PC-9 (cell line): ENCODE measurements at regions of chr17 and their contacts with region 1.

Region 1: GRCh38 chr17:6473128-6473767 is 29.0 kb downstream of the PIMREG start:
- DNase-seq: peak; percentile 51 to 87
- H3K4me3 ChIP-seq: no peak overlapping the region
- H3K27ac ChIP-seq: no peak overlapping the region
- H3K4me1 ChIP-seq: peaks cover 32% of the 10 kb centered on the region
- H3K27me3 ChIP-seq: no peaks in the 10 kb centered on the region
- CTCF ChIP-seq: peak; percentile 99

Region 2: GRCh38 chr17:6507535-6507934 is 34.3 kb after region 1 on chr17:
- CTCF ChIA-PET with region 1: interaction called, 3 read pairs
- POLR2A ChIA-PET with region 1: no interaction called
- intact Hi-C with region 1: loop called (anchors 1 kb)
- DNase-seq: peak; percentile 84 to 88
- H3K4me3 ChIP-seq: no peak overlapping the region
- H3K27ac ChIP-seq: peak overlapping the region; percentile 86
- H3K4me1 ChIP-seq: peaks cover 55% of the 10 kb centered on the region
- H3K27me3 ChIP-seq: no peaks in the 10 kb centered on the region
- CTCF ChIP-seq: no peak

Region 3: DNA sequence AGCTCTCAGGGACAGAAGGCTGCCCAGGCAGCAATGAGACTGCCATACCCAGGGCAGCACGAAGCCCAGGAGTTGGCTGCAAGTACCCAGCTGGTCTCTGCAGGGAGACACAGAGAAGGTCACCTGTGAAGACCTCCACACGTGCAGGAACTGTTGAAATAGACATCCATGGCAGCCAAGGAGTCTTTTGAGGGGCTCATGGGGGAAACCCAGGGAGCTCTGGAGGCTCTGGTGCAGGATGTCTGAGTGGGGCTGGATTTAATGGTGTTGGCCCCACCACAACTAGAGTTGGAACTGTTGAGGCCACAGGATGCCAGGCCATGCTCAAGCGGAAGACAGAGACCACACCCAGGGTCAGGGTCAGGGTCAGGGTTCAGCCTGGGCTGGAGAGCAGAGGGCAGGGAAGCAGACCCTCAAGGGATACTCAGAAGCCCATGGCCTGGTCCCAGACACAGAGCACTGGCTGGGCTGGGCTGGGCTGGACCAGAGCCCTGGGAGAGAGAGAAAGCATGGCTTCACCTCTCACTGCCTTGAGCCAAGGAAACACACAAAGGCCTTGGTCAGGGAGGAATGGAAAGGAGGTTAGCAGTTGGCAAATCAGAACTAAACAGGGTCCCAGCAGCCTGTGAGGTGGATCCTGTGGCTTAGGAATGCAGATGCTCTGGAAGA is 61.7 kb after region 1 on chr17:
- CTCF ChIA-PET with region 1: no interaction called
- POLR2A ChIA-PET with region 1: no interaction called
- intact Hi-C with region 1: no loop called
- DNase-seq: no peak
- H3K4me3 ChIP-seq: no peak overlapping the region
- H3K27ac ChIP-seq: no peak overlapping the region
- H3K4me1 ChIP-seq: no peaks in the 10 kb centered on the region
- H3K27me3 ChIP-seq: no peaks in the 10 kb centered on the region
- CTCF ChIP-seq: no peak

Region 4: GRCh38 chr17:6567529-6568183 is 94.4 kb after region 1 on chr17:
- CTCF ChIA-PET with region 1: interaction called, 13 read pairs
- POLR2A ChIA-PET with region 1: no interaction called
- intact Hi-C with region 1: no loop called
- DNase-seq: peak in 1 of 2 experiments; percentile 59
- H3K4me3 ChIP-seq: no peak overlapping the region
- H3K27ac ChIP-seq: peak overlapping the region; percentile 67
- H3K4me1 ChIP-seq: peaks cover 7% of the 10 kb centered on the region; the same call in 1 of the 2 replicates
- H3K27me3 ChIP-seq: no peaks in the 10 kb centered on the region
- CTCF ChIP-seq: no peak

Region 5: DNA sequence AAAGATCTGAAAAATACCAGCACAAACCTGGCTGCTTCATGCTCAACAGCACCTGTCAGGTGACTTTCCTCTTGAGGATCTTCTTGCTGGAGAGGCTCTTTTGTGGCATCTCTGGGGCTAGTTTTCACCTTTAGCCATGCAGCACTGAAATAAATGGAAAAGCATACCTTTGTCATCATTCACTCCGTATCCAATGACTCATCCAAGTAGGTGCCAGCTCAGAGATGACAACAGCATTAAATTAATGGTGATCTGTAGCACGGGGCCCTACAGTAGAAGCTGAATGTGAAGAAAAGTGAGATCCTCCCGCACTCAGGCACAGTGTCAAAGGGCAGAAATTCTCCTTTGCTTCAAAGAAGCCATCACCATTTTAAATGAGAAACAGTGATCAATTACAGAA is 135.1 kb after region 1 on chr17:
- CTCF ChIA-PET with region 1: interaction called, 4 read pairs
- POLR2A ChIA-PET with region 1: interaction called, 14 read pairs
- intact Hi-C with region 1: loop called (anchors 1 kb)
- DNase-seq: peak; percentile 53 to 83
- H3K4me3 ChIP-seq: no peak overlapping the region
- H3K27ac ChIP-seq: peak overlapping the region; percentile 66
- H3K4me1 ChIP-seq: peaks cover 16% of the 10 kb centered on the region
- H3K27me3 ChIP-seq: no peaks in the 10 kb centered on the region
- CTCF ChIP-seq: no peak

Region 6: DNA sequence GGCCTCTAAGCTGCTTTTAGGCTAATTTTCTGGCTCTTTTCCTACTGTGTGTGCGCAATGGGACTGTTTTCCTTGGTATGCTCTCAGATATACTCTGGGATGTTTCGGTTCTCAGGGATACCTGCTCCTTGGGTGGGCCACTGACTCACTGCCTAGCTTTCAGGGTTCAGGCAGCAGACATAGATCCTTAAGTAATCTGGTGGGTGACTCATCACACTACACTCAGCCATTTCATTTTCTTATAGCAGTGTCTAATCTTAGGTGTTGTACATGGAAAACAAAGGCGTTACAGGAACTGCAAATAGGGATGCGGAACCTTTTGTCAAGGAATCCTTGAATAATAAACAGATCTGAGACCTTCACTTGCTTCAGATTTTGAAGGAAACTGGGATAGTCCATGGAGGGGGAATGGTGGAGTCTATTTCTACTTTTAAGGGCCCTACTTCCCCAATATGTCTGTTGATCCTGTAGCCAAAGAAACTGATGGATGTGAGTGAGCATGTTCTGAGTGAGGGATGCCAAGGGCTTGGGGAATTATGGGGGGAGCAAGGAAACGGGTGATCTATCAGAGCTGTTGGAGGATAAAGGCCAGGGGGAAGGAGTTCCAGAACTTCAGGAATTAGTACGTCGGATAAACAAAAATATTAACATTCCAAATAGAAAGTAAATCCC is 399.0 kb after region 1 on chr17:
- CTCF ChIA-PET with region 1: no interaction called
- POLR2A ChIA-PET with region 1: no interaction called
- intact Hi-C with region 1: no loop called
- DNase-seq: peak; percentile 78 to 94
- H3K4me3 ChIP-seq: no peak overlapping the region
- H3K27ac ChIP-seq: peak overlapping the region; percentile 93
- H3K4me1 ChIP-seq: peaks cover 50% of the 10 kb centered on the region
- H3K27me3 ChIP-seq: no peaks in the 10 kb centered on the region
- CTCF ChIP-seq: no peak